H1 (cell line): ENCODE measurements at regions of chr4 and their contacts with region 1.

Region 1: DNA sequence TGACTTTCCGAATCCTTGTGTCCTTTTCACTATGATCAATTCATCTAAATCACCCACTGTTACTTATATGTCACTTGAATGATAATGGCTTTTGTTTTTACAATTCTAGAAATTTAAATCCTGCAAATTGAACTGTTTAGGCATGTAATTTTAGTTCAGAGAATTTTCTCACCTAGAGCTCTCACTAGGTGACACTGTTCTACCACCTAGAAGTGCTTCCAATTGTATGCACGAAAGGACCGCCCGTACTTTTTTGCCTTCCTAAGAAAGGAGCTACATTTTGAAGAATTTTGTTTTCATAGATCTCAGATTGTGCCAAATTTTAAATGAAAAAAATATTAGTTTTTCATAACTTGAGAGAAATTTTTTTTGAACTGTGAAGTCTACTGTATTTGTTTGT is 481.6 kb upstream of the FSTL5 start:
- DNase-seq: no peak
- H3K4me3 ChIP-seq: no peak overlapping the region
- H3K27ac ChIP-seq: no peak overlapping the region
- H3K4me1 ChIP-seq: no peaks in the 10 kb centered on the region
- H3K27me3 ChIP-seq: no peaks in the 10 kb centered on the region
- CTCF ChIP-seq: peak in 2 of 3 experiments; percentile 55 to 60; a peak in 3 of 4 replicates
- EP300 ChIP-seq: no peak
- POLR2A ChIP-seq: no peak
- RAD21 ChIP-seq: peak; percentile 84

Region 2: DNA sequence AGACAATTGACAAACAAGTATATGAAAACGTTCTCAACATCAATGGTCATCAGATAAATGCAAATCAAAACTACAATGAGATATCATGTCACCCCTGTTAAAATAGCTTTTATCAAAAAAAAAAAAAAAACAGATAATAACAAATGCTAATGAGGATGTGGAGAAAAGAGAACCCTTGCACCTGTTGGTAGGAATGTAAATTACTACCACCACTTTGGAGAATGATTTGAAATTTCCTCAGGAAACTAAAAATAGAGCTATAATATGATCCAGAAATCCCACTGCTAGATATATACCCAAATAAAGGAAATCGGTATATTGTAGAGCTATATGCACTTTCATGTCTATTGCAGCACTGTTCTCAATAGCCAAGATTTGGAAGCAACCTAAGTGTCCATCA is 11.0 kb before region 1 on chr4:
- CTCF ChIA-PET with region 1: interaction called, 11 read pairs
- POLR2A ChIA-PET with region 1: no interaction called
- DNase-seq: no peak
- H3K4me3 ChIP-seq: no peak overlapping the region
- H3K27ac ChIP-seq: no peak overlapping the region
- H3K4me1 ChIP-seq: no peaks in the 10 kb centered on the region
- H3K27me3 ChIP-seq: no peaks in the 10 kb centered on the region
- CTCF ChIP-seq: no peak
- EP300 ChIP-seq: no peak
- POLR2A ChIP-seq: no peak
- RAD21 ChIP-seq: no peak

Region 3: GRCh38 chr4:163042306-163042705 is 396.9 kb after region 1 on chr4:
- CTCF ChIA-PET with region 1: interaction called, 28 read pairs
- POLR2A ChIA-PET with region 1: no interaction called
- DNase-seq: no peak
- H3K4me3 ChIP-seq: no peak overlapping the region
- H3K27ac ChIP-seq: no peak overlapping the region
- H3K4me1 ChIP-seq: no peaks in the 10 kb centered on the region
- H3K27me3 ChIP-seq: no peaks in the 10 kb centered on the region
- CTCF ChIP-seq: no peak
- EP300 ChIP-seq: no peak
- POLR2A ChIP-seq: no peak
- RAD21 ChIP-seq: no peak